ENCODE measurements at regions of chr11 and their contacts with region 1.

Region 1: GRCh38 chr11:89613911-89614310 is 96.2 kb upstream of the TRIM77 start:
- DNase-seq: no peak
- ATAC-seq: no peak
- H3K4me3 ChIP-seq: no peak overlapping the region
- H3K27ac ChIP-seq: no peak overlapping the region
- H3K4me1 ChIP-seq: no peaks in the 10 kb centered on the region
- H3K27me3 ChIP-seq: no peaks in the 10 kb centered on the region
- CTCF ChIP-seq: no peak
- POLR2A ChIP-seq: no peak
- RAD21 ChIP-seq: no peak

Region 2: GRCh38 chr11:88552377-88553062 is 1061.4 kb before region 1 on chr11:
- CTCF ChIA-PET with region 1: no interaction called
- POLR2A ChIA-PET with region 1: no interaction called
- RAD21 ChIA-PET with region 1: no interaction called
- intact Hi-C with region 1: loop called (anchors 10 kb)
- DNase-seq: peak; percentile 48
- ATAC-seq: peak; percentile 83
- H3K4me3 ChIP-seq: no peak overlapping the region
- H3K27ac ChIP-seq: no peak overlapping the region
- H3K4me1 ChIP-seq: peaks cover 9 to 26% of the 10 kb centered on the region in 2 experiments; a peak in 3 of 4 replicates
- H3K27me3 ChIP-seq: no peaks in the 10 kb centered on the region
- CTCF ChIP-seq: peak; percentile 44 to 90 (median 88); a peak in 5 of 6 replicates
- POLR2A ChIP-seq: no peak
- RAD21 ChIP-seq: peak; percentile 72

Region 3: DNA sequence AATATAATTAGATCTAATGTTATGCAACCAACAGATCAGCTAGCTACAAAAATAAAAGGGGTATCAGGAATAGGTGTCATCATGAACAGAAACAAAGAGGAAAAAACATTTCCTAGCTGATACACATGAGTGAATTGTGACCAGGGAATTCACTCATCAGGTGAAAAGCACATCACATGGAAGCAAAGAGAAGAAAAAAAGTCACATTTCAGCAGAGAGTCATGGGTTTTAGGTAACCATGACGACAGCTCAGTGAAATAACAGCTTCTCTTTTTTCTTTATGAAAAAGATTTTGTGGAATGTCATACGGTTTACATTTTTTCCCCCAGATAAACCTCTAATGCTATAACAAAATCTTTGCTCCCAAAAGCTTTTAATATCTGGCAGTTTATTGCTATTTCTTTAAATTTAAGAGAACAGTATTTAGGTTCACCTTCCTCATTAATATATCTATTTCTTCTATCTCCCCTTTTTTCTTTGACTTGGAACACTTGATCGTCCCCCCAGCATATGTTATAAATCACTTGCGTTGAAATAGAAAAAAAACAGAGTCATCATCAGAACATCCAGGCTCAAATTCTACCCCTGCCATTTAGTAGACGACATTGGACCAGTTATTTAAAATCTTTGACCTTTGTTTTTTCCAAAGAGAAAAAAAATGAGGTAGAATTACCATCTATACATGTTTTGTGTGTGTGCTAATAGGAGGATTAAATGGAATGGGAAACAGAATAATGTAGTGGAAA is 431.0 kb before region 1 on chr11:
- CTCF ChIA-PET with region 1: no interaction called
- POLR2A ChIA-PET with region 1: no interaction called
- RAD21 ChIA-PET with region 1: no interaction called
- intact Hi-C with region 1: no loop called
- DNase-seq: no peak
- ATAC-seq: no peak
- H3K4me3 ChIP-seq: no peak overlapping the region
- H3K27ac ChIP-seq: no peak overlapping the region
- H3K4me1 ChIP-seq: no peaks in the 10 kb centered on the region
- H3K27me3 ChIP-seq: no peaks in the 10 kb centered on the region
- CTCF ChIP-seq: no peak
- POLR2A ChIP-seq: no peak
- RAD21 ChIP-seq: no peak

Region 4: DNA sequence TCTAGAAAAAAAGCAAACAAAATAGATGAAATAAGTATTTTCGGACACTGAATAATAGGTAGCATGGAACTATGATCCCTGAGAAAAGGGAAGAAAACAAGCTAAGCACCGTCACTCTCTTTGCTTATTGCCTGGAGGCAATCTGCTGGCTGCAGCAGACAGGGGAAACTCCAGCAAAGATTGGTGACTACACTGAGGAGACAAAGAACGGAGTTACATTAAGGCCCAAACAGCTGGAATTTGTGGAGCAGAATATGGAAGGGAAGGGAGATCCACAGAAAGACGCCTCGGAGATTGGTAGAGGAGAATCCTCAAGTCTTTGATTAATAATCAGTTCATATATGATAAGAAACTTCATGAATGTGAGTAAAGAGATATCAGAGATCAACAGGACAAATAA is 286.0 kb before region 1 on chr11:
- CTCF ChIA-PET with region 1: no interaction called
- POLR2A ChIA-PET with region 1: no interaction called
- RAD21 ChIA-PET with region 1: no interaction called
- intact Hi-C with region 1: loop called (anchors 10 kb)
- DNase-seq: no peak
- ATAC-seq: no peak
- H3K4me3 ChIP-seq: no peak overlapping the region
- H3K27ac ChIP-seq: no peak overlapping the region
- H3K4me1 ChIP-seq: no peaks in the 10 kb centered on the region
- H3K27me3 ChIP-seq: no peaks in the 10 kb centered on the region
- CTCF ChIP-seq: no peak
- POLR2A ChIP-seq: no peak
- RAD21 ChIP-seq: no peak

Region 5: GRCh38 chr11:89490981-89491690 is 122.8 kb before region 1 on chr11 and contains the start of gene NOX4:
- CTCF ChIA-PET with region 1: no interaction called
- POLR2A ChIA-PET with region 1: no interaction called
- RAD21 ChIA-PET with region 1: no interaction called
- intact Hi-C with region 1: loop called (anchors 10 kb)
- DNase-seq: no peak
- ATAC-seq: no peak
- H3K4me3 ChIP-seq: no peak within 1 kb of the TSS
- H3K27ac ChIP-seq: no peak within 1 kb of the TSS
- H3K4me1 ChIP-seq: no peaks in the 10 kb centered on the region
- H3K27me3 ChIP-seq: peaks cover 13% of the 10 kb centered on the region; the same call in 1 of the 2 replicates
- CTCF ChIP-seq: no peak
- POLR2A ChIP-seq: no peak
- RAD21 ChIP-seq: no peak
- total RNA-seq, gene NOX4: not detected